ENCODE measurements at regions of chr4 and their contacts with region 1.

Region 1: DNA sequence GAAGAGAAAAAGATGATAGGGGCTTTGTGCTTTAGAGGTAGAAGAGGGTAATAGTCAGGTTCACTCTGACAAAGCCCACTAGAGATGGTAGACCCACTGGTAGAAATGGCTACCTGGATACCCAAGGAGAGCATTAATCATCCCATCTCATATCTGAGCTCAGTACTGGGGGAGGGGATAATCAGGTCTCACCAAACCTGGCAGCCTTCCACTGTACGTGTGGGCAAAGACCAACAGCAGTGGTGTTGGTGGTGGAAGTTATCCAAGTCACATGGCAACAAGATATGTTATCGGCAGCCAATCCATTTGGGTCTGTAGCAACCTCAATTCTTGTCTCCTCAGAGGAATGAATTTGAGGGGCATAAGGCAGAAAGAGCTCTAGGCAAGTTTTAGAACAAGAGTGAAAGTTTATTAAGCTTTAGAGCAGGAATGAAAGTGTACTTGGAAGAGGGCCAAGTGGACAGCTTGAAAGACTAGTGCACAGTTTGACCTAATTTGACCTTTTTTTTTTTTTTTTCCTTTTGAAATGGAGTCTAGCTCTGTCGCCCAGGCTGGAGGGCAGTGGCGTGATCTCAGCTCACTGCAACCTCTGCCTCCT is 67.0 kb upstream of the CXCL13 start:
- DNase-seq: peak; percentile 56 to 65
- H3K4me3 ChIP-seq: no peak overlapping the region
- H3K27ac ChIP-seq: peak overlapping the region; percentile 54
- H3K4me1 ChIP-seq: peaks cover 24% of the 10 kb centered on the region
- H3K27me3 ChIP-seq: no peaks in the 10 kb centered on the region
- CTCF ChIP-seq: no peak

Region 2: DNA sequence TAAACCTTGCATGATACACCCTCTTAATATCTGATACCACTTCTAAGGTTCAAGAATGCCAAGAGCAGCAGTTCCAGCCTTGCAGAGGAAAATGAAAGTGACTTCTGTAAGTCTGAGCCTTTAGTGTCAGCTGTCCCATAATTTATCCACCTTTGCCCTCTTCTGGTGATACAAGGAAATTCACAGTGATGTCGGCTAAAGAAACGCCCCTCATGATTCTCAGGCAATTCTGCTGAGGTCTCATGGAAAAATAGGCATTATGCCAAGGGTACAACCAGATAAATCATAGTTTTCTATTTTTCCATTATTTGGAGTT is 105.3 kb before region 1 on chr4:
- CTCF ChIA-PET with region 1: no interaction called
- POLR2A ChIA-PET with region 1: no interaction called
- intact Hi-C with region 1: no loop called
- DNase-seq: peak; percentile 2 to 41
- H3K4me3 ChIP-seq: no peak overlapping the region
- H3K27ac ChIP-seq: no peak overlapping the region
- H3K4me1 ChIP-seq: no peaks in the 10 kb centered on the region
- H3K27me3 ChIP-seq: no peaks in the 10 kb centered on the region
- CTCF ChIP-seq: peak; percentile 60

Region 3: GRCh38 chr4:77564231-77564630 is 25.6 kb after region 1 on chr4:
- CTCF ChIA-PET with region 1: interaction called, 5 read pairs
- POLR2A ChIA-PET with region 1: interaction called, 18 read pairs
- intact Hi-C with region 1: no loop called
- DNase-seq: no peak
- H3K4me3 ChIP-seq: no peak overlapping the region
- H3K27ac ChIP-seq: no peak overlapping the region
- H3K4me1 ChIP-seq: no peaks in the 10 kb centered on the region
- H3K27me3 ChIP-seq: no peaks in the 10 kb centered on the region
- CTCF ChIP-seq: no peak

Region 4: DNA sequence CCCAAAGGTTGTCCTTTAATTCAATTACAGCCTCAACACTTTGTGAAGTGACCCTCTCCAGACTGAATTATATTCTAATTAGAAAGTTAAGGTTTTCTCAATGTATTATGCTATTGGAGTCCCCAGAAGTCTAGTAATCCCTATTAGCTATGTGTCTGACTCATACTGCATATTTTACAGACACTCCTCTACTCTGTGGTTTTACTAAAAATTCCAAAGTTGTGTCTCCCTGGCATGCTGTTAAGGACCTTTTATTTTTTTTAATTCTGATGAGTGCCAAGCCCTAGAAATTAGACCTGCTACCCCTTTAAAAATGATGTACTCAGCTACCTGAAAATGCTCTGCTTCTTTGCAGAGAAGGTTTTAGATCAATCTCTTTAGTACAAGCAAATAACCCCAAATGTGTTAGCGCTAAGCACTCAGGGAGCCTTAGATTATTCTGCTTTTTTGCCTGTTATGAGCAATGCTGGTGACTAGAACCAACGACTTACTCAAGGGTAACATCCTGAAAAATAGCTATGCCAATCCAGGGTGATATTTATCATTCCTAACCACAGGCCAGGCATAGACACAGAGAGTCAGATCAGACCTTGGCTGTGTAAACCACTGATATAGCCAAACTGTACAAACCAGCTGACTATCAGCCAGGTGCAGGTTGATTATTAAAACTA is 40.9 kb after region 1 on chr4:
- CTCF ChIA-PET with region 1: no interaction called
- POLR2A ChIA-PET with region 1: no interaction called
- intact Hi-C with region 1: loop called (anchors 2 kb)
- DNase-seq: peak; percentile 27 to 88
- H3K4me3 ChIP-seq: no peak overlapping the region; the same call in 1 of the 2 replicates
- H3K27ac ChIP-seq: peak overlapping the region; percentile 77
- H3K4me1 ChIP-seq: peaks cover 39% of the 10 kb centered on the region
- H3K27me3 ChIP-seq: no peaks in the 10 kb centered on the region
- CTCF ChIP-seq: no peak

Region 5: DNA sequence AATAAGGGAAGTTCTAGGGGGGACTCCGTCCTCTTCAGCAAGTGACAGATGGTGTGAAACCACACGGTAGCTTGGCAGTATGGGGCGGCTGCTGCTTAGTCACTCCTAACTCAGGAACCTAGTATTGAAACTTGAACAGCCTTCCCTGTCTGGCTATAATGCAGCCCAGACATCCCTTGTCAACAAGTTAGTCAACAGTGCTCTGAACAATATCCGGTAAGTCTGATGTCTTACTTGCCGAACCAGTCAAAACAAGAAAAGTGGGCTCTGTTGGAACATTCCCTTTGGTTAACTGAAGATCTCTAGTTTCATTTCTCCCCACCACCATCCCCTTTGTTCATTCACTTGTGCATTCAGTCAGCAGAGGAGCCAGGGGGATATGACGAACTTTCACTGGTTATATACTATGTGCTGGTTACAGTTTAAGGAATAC is 48.3 kb after region 1 on chr4:
- CTCF ChIA-PET with region 1: no interaction called
- POLR2A ChIA-PET with region 1: no interaction called
- intact Hi-C with region 1: loop called (anchors 2 kb)
- DNase-seq: peak; percentile 36 to 81
- H3K4me3 ChIP-seq: no peak overlapping the region
- H3K27ac ChIP-seq: peak overlapping the region; percentile 51
- H3K4me1 ChIP-seq: peaks cover 11% of the 10 kb centered on the region
- H3K27me3 ChIP-seq: no peaks in the 10 kb centered on the region
- CTCF ChIP-seq: no peak